ENCODE measurements at regions of chr12 and their contacts with region 1.

Region 1: DNA sequence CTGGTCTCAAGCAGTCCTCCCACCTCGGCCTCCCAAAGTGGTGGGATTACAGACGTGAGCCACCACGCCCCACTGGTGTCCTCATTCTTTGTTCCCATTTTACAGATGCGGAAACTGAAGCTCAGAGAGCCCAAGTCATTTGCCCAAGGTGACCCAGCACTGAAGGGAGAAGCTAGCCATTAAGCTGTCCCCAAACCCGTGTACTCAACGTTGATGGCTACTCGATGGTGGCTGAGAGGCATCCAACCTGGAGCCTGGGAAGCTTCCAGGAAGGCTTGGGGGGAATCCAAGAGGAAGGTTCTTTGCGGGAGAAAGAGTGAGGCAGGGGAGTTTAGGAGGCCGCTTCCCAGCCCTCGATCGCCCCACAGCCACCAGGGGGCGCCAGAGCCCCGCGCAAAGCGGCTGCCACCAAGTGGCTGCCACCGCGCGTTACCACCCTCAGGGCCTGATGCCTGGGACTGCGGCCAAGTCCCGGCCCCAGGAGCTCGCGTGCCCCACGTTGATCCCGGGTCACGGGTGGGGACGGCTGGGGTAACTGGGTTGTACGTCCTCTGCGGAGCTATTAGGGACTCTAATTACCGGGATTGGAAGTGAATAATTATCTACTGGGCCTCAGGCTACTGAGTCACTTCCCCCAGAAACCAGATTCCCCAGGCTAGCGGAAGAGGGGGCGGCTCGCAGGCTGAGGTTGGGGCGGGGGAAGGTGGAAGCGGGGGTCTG is 8.8 kb upstream of the SH2B3 start:
- DNase-seq: peak; percentile 96
- H3K4me3 ChIP-seq: no peak overlapping the region
- H3K27ac ChIP-seq: peak overlapping the region; percentile 81
- H3K4me1 ChIP-seq: peaks cover 27% of the 10 kb centered on the region
- H3K27me3 ChIP-seq: no peaks in the 10 kb centered on the region
- CTCF ChIP-seq: peak; percentile 99 to 100
- POLR2A ChIP-seq: peak; percentile 57

Region 2: DNA sequence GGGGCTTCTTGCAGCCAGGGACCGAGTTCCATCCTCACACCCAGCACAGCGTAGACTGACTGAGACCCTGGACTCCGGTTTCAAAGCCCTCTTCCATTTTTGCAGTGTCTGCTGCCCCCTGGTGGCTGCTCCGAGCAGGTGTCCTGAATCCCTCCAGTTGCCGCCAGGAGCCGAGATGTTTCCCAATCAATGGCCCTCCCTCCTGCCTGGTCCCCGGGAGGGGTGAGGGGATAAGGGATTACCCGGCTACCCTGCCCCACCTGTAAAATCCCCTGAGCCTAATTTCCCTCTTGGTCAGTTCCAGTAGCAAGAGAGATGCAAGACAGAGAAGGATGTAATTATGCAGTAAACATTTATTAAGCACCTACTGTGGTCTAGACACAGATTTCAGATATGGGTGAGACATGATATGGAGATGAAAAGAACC is 83.0 kb before region 1 on chr12:
- CTCF ChIA-PET with region 1: no interaction called
- POLR2A ChIA-PET with region 1: no interaction called
- dilution Hi-C with region 1: no loop called
- intact Hi-C with region 1: no loop called
- DNase-seq: peak; percentile 71
- H3K4me3 ChIP-seq: no peak overlapping the region
- H3K27ac ChIP-seq: no peak overlapping the region
- H3K4me1 ChIP-seq: peaks cover 7% of the 10 kb centered on the region
- H3K27me3 ChIP-seq: no peaks in the 10 kb centered on the region
- CTCF ChIP-seq: peak; percentile 94 to 96
- POLR2A ChIP-seq: no peak

Region 3: GRCh38 chr12:111330800-111331752 is 65.8 kb before region 1 on chr12:
- CTCF ChIA-PET with region 1: interaction called, 37 read pairs
- POLR2A ChIA-PET with region 1: no interaction called
- dilution Hi-C with region 1: no loop called
- intact Hi-C with region 1: loop called (anchors 1 kb)
- DNase-seq: peak; percentile 59
- H3K4me3 ChIP-seq: no peak overlapping the region
- H3K27ac ChIP-seq: no peak overlapping the region
- H3K4me1 ChIP-seq: no peaks in the 10 kb centered on the region
- H3K27me3 ChIP-seq: peaks cover 0 to 3% of the 10 kb centered on the region in 2 experiments
- CTCF ChIP-seq: peak; percentile 39 to 54
- POLR2A ChIP-seq: no peak

Region 4: GRCh38 chr12:111428728-111429175 is 31.9 kb after region 1 on chr12:
- CTCF ChIA-PET with region 1: interaction called, 28 read pairs
- POLR2A ChIA-PET with region 1: no interaction called
- dilution Hi-C with region 1: no loop called
- intact Hi-C with region 1: no loop called
- DNase-seq: peak; percentile 73
- H3K4me3 ChIP-seq: no peak overlapping the region
- H3K27ac ChIP-seq: peak overlapping the region; percentile 72
- H3K4me1 ChIP-seq: peaks cover 86% of the 10 kb centered on the region
- H3K27me3 ChIP-seq: no peaks in the 10 kb centered on the region
- CTCF ChIP-seq: no peak
- POLR2A ChIP-seq: no peak

Region 5: GRCh38 chr12:111444925-111445725 is 48.2 kb after region 1 on chr12:
- CTCF ChIA-PET with region 1: interaction called, 464 read pairs
- POLR2A ChIA-PET with region 1: interaction called, 6 read pairs
- dilution Hi-C with region 1: no loop called
- intact Hi-C with region 1: loop called (anchors 1 kb)
- DNase-seq: no peak
- H3K4me3 ChIP-seq: no peak overlapping the region
- H3K27ac ChIP-seq: peak overlapping the region; percentile 81
- H3K4me1 ChIP-seq: peaks cover 59% of the 10 kb centered on the region
- H3K27me3 ChIP-seq: no peaks in the 10 kb centered on the region
- CTCF ChIP-seq: no peak
- POLR2A ChIP-seq: peak; percentile 28

Region 6: DNA sequence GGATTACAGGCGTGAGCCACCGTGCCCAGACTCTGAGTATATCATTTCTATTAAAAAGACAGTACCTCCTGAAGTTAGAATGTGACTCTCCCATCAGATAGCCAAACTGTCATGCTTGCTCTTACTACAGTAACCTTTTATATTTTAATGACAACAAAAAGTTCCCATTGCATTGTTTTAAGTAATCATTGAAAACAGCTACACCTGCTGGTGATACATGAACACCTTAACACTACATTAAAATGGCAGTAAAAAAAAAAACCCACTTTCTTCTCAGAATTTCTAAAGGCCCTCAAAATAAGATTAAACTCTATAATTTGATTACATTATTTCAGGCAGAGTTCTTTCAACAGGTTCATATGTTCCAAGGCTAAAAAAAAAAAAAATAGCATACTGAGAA is 85.6 kb after region 1 on chr12:
- CTCF ChIA-PET with region 1: interaction called, 38 read pairs
- POLR2A ChIA-PET with region 1: no interaction called
- dilution Hi-C with region 1: no loop called
- intact Hi-C with region 1: loop called (anchors 1 kb)
- DNase-seq: no peak
- H3K4me3 ChIP-seq: no peak overlapping the region
- H3K27ac ChIP-seq: no peak overlapping the region
- H3K4me1 ChIP-seq: no peaks in the 10 kb centered on the region
- H3K27me3 ChIP-seq: no peaks in the 10 kb centered on the region
- CTCF ChIP-seq: peak in 1 of 2 donors; percentile 16
- POLR2A ChIP-seq: no peak

Region 7: GRCh38 chr12:111529424-111530368 is 132.8 kb after region 1 on chr12:
- CTCF ChIA-PET with region 1: interaction called, 32 read pairs
- POLR2A ChIA-PET with region 1: no interaction called
- dilution Hi-C with region 1: no loop called
- intact Hi-C with region 1: loop called (anchors 1 kb)
- DNase-seq: peak; percentile 73
- H3K4me3 ChIP-seq: no peak overlapping the region
- H3K27ac ChIP-seq: no peak overlapping the region
- H3K4me1 ChIP-seq: no peaks in the 10 kb centered on the region
- H3K27me3 ChIP-seq: no peaks in the 10 kb centered on the region
- CTCF ChIP-seq: peak; percentile 69 to 70
- POLR2A ChIP-seq: no peak

Region 8: GRCh38 chr12:111685744-111686517 is 289.0 kb after region 1 on chr12 and contains the starts of genes ACAD10 and BRAP:
- CTCF ChIA-PET with region 1: interaction called, 5 read pairs
- POLR2A ChIA-PET with region 1: no interaction called
- dilution Hi-C with region 1: no loop called
- intact Hi-C with region 1: loop called (anchors 5 kb)
- DNase-seq: peak; percentile 98
- H3K4me3 ChIP-seq: peak within 1 kb of the TSS; percentile 47 to 85 (median 74)
- H3K27ac ChIP-seq: peak within 1 kb of the TSS; percentile 28
- H3K4me1 ChIP-seq: peaks cover 19% of the 10 kb centered on the region
- H3K27me3 ChIP-seq: no peaks in the 10 kb centered on the region
- CTCF ChIP-seq: no peak
- POLR2A ChIP-seq: peak; percentile 97
- total RNA-seq, gene ACAD10: 14.9 and 16.3 TPM in 2 replicates
- total RNA-seq, gene BRAP: 16.5 and 18.6 TPM in 2 replicates